MCF 10A (cell line): ENCODE measurements at regions of chr5 and their contacts with region 1.

Region 1: GRCh38 chr5:160021831-160022446 is 13.0 kb downstream of the TTC1 start:
- DNase-seq: peak; percentile 81
- H3K4me3 Mint-ChIP-seq: no peak overlapping the region
- H3K27ac Mint-ChIP-seq: no peak overlapping the region
- H3K4me1 Mint-ChIP-seq: peaks cover 13% of the 10 kb centered on the region
- H3K27me3 Mint-ChIP-seq: no peaks in the 10 kb centered on the region
- CTCF ChIP-seq: peak; percentile 82

Region 2: DNA sequence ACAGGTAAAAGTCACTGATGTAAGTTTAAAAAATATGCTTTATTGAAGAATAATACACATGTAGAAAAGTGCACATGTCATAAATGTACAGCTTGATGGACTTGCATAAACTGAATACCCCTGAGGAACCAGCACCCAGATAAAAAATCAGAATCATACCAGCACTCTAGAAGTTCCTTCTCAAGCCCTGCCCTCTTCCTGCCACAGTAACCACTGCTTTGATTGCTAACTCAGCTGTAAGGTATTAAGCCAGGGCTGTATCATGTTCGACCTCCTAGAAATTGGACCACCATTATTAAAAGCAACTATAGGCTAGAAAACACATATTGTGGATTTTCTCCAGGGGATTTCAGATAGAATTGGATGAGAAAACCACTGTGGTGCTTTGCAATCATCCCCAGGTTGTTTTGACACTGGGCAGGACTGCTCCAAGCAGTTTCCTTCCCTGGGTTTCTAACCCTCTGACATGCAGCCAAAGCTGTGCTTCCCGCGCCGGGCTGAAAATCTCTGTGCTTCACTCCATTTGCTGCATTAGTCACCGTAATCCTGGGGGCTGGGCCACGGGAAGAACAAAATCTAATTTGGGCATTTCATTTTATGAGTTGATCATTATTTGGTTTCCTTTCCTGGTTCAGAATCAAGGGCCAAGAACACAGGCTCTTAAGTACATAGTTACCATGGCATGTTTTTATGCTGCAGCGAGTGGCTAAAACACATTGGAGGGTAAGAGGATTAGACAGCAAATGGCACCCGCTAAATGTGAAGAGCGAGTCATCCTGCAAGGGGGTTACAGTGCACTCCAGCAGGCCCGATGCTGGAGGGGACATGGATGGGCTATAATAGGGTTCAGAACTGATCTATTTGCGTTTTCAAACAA is 552.2 kb before region 1 on chr5:
- CTCF ChIA-PET with region 1: no interaction called
- POLR2A ChIA-PET with region 1: no interaction called
- intact Hi-C with region 1: no loop called
- DNase-seq: no peak
- H3K4me3 Mint-ChIP-seq: no peak overlapping the region
- H3K27ac Mint-ChIP-seq: no peak overlapping the region
- H3K4me1 Mint-ChIP-seq: no peaks in the 10 kb centered on the region
- H3K27me3 Mint-ChIP-seq: peaks cover 3% of the 10 kb centered on the region
- CTCF ChIP-seq: no peak

Region 3: GRCh38 chr5:160008877-160009590 is 12.9 kb before region 1 on chr5 and contains the start of gene TTC1:
- CTCF ChIA-PET with region 1: interaction called, 41 read pairs
- POLR2A ChIA-PET with region 1: interaction called, 23 read pairs
- intact Hi-C with region 1: no loop called
- DNase-seq: peak; percentile 100
- H3K4me3 Mint-ChIP-seq: peak within 1 kb of the TSS; percentile 92
- H3K27ac Mint-ChIP-seq: peak within 1 kb of the TSS; percentile 98
- H3K4me1 Mint-ChIP-seq: peaks cover 19% of the 10 kb centered on the region
- H3K27me3 Mint-ChIP-seq: no peaks in the 10 kb centered on the region
- CTCF ChIP-seq: no peak
- total RNA-seq, gene TTC1: 84.6 and 100 TPM in 2 replicates

Region 4: DNA sequence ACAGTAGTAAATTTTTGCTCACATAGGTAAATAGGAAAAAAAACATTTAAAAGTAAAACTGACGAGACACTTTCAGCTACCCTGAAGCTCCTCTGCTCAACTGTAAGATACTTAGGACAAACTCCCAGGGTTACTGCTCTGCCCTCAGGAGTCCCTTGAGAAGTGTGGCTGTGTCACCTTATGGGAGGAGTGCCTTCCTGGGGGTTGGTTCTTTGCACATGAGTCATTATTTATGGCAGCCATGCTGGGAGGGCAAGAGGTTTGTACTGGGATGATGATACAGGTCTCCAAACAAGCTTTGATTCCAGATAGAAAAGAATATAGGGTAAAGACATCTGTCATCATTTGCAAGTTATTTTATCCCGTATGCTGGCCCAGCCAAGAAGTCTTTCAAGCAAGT is 32.9 kb after region 1 on chr5:
- CTCF ChIA-PET with region 1: interaction called, 22 read pairs
- POLR2A ChIA-PET with region 1: interaction called, 3 read pairs
- intact Hi-C with region 1: no loop called
- DNase-seq: peak; percentile 29
- H3K4me3 Mint-ChIP-seq: no peak overlapping the region
- H3K27ac Mint-ChIP-seq: no peak overlapping the region
- H3K4me1 Mint-ChIP-seq: no peaks in the 10 kb centered on the region
- H3K27me3 Mint-ChIP-seq: no peaks in the 10 kb centered on the region
- CTCF ChIP-seq: no peak

Region 5: GRCh38 chr5:160082614-160083500 is 60.9 kb after region 1 on chr5:
- CTCF ChIA-PET with region 1: interaction called, 7 read pairs
- POLR2A ChIA-PET with region 1: no interaction called
- intact Hi-C with region 1: loop called (anchors 5 kb)
- DNase-seq: peak; percentile 61
- H3K4me3 Mint-ChIP-seq: no peak overlapping the region
- H3K27ac Mint-ChIP-seq: no peak overlapping the region
- H3K4me1 Mint-ChIP-seq: peaks cover 17% of the 10 kb centered on the region
- H3K27me3 Mint-ChIP-seq: no peaks in the 10 kb centered on the region
- CTCF ChIP-seq: no peak

Region 6: GRCh38 chr5:160240350-160240749 is 218.4 kb after region 1 on chr5:
- CTCF ChIA-PET with region 1: interaction called, 6 read pairs
- POLR2A ChIA-PET with region 1: no interaction called
- intact Hi-C with region 1: loop called (anchors 5 kb)
- DNase-seq: no peak
- H3K4me3 Mint-ChIP-seq: no peak overlapping the region
- H3K27ac Mint-ChIP-seq: no peak overlapping the region
- H3K4me1 Mint-ChIP-seq: no peaks in the 10 kb centered on the region
- H3K27me3 Mint-ChIP-seq: peaks cover 18% of the 10 kb centered on the region
- CTCF ChIP-seq: no peak

Region 7: DNA sequence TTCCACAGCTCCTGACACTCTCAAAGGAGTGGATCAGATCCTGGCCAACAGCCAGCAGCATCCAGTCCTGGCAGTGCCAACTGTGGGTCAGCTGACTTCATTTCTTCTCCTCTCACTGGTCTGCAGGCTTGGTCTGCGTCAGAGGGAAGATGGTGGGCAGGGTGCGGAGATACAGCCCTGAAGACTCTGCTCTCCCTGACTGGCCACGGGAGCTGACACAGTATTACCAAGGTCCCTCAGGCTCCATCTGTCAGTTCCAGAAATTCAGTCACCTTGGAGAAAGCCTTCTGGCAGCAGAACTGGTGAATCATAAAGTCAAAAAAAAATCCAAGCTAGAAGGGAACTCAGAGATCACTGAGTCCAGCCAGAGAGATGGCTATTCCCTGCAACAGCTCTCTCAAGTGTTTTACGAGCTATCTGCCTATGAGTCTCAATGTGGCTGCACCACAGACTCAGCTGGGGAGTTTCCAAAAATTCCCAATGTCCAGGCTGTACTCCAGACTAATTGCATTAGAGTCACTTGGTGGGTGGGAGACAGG is 320.5 kb after region 1 on chr5:
- CTCF ChIA-PET with region 1: interaction called, 175 read pairs
- POLR2A ChIA-PET with region 1: interaction called, 9 read pairs
- intact Hi-C with region 1: loop called (anchors 1 kb)
- DNase-seq: peak; percentile 72
- H3K4me3 Mint-ChIP-seq: no peak overlapping the region
- H3K27ac Mint-ChIP-seq: no peak overlapping the region
- H3K4me1 Mint-ChIP-seq: no peaks in the 10 kb centered on the region
- H3K27me3 Mint-ChIP-seq: no peaks in the 10 kb centered on the region
- CTCF ChIP-seq: no peak

Region 8: DNA sequence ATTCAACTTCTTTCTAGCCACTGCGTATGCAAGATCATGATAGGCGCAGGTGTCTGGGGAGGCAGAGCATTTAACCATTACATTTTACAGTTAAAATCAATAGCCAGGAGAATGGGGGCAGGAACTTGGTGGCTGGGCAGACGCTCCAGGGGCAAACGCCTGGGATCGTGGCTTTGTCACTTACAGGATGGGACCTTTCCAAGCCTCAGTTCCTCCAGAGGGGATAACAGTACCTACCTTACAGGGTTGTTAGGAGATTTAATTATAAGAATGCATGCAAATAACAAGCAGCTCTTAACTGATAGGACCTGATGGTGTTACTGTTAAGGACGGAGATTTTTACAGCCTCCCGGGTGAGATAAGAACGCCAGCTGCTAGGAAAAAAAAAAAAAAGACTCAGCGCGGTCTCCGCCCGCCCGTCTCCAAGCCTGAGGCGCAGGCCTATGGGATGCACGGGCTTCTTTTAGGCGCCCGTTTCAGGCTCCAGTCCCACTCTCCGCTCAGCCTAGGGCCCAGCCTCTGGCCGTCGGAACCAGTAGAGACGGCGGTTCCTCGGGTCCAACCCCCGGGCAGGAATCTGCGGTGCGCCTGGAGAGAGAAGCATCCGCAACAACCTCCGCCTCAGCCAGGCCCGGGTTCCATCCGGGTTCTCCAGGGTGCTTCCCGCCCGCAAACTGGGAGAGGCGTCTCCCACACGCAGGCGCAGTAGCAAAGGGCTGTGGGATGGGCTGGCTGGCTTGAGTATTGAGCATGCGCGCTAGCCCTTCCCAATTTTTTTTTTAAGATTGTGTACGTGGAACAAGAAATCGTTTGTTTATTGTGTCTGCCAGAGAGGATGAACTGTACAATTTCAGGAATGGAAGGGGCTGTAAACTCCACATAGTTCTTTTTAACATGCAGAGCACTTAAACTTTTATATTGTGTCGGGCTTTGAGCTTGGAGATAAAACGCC is 377.7 kb after region 1 on chr5 and contains the start of gene FAM200C:
- CTCF ChIA-PET with region 1: interaction called, 162 read pairs
- POLR2A ChIA-PET with region 1: interaction called, 3 read pairs
- intact Hi-C with region 1: no loop called
- DNase-seq: peak; percentile 97
- H3K4me3 Mint-ChIP-seq: peak within 1 kb of the TSS; percentile 85
- H3K27ac Mint-ChIP-seq: peak within 1 kb of the TSS; percentile 94
- H3K4me1 Mint-ChIP-seq: peaks cover 14% of the 10 kb centered on the region
- H3K27me3 Mint-ChIP-seq: no peaks in the 10 kb centered on the region
- CTCF ChIP-seq: no peak
- total RNA-seq, gene FAM200C: 2.2 and 3.7 TPM in 2 replicates